Breast epithelium (tissue), 4 donors: ENCODE measurements at regions of chr11 and their contacts with region 1.

Region 1: GRCh38 chr11:17504330-17505107 is 27.9 kb upstream of the ABCC8 start:
- DNase-seq: peak; percentile 77 to 81
- H3K4me3 ChIP-seq: no peak overlapping the region
- H3K27ac ChIP-seq: peak overlapping the region; percentile 26 to 48
- H3K4me1 ChIP-seq: no peaks in the 10 kb centered on the region
- H3K27me3 ChIP-seq: no peaks in the 10 kb centered on the region
- CTCF ChIP-seq: peak; percentile 78 to 95 (median 79)
- POLR2A ChIP-seq: no peak

Region 2: DNA sequence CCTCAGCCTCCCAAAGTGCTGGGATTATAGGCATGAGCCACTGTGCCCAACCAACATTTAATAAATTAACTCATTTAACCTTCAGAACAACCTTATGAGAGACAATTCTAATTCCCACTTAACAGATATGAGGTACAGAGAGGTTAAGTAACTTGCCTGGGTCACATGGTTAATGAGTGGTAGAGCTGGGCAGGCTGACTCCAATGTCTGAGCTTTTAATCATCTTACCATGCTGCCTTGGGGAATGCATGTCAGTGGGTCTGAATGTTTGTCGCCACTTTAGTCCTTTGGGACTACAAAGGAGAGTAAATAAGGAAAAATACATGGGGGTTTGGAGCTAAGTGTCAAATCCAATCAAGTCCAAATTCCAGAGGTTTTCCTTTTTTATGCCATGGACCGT is 285.5 kb before region 1 on chr11:
- intact Hi-C with region 1: no loop called
- DNase-seq: no peak
- H3K4me3 ChIP-seq: no peak overlapping the region
- H3K27ac ChIP-seq: no peak overlapping the region
- H3K4me1 ChIP-seq: no peaks in the 10 kb centered on the region
- H3K27me3 ChIP-seq: no peaks in the 10 kb centered on the region
- CTCF ChIP-seq: no peak
- POLR2A ChIP-seq: no peak

Region 3: DNA sequence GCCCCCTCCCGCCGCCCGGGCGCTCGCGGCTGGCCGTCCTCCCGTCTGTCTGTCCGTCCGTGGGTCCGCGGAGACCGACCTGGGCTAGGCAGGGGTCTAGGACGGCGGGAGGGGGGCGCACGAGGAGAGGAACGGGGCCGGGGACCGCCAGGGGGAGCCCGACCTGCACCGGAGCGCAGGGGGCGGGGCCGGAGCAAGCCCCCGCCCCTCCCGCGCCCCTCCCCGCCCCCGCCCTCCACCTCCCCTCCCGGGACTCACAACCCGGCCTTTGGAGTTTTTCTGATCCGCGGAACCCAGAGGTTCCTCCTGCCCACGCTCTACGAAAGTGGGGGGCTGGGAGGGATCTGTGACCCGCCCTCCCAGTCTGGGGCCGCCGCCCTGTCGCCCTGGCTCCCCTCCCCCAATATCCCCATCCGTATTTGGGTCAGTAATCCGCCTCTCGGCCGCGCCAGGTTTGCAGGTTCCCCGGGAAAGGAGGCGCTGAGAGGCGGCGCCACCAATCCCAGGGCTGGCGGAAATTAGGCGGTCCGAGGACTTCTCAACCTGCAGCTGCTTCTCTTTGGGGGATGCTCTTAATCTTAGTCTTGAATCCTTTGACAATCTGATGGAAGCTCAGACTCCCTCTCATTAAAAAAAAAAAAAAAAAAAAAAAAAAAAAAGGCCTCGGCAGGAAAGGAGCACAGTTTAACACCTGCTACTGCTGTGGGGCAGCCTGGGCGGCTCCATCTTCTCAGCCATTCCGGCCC is 115.1 kb before region 1 on chr11:
- intact Hi-C with region 1: loop called (anchors 5 kb)
- DNase-seq: peak; percentile 75 to 80
- H3K4me3 ChIP-seq: peak overlapping the region; percentile 38 to 76 (median 56)
- H3K27ac ChIP-seq: peak overlapping the region; percentile 80 to 81
- H3K4me1 ChIP-seq: no peaks in the 10 kb centered on the region
- H3K27me3 ChIP-seq: no peaks in the 10 kb centered on the region
- CTCF ChIP-seq: peak in 1 of 3 donors; percentile 60
- POLR2A ChIP-seq: no peak